Mucosa of descending colon (tissue), 3 donors: ENCODE measurements at regions of chr2 and their contacts with region 1.

Region 1: GRCh38 chr2:54704688-54705605 is 18.5 kb upstream of the EML6 start:
- DNase-seq: no peak
- ATAC-seq: peak; percentile 31
- H3K4me3 ChIP-seq: no peak overlapping the region
- H3K4me1 ChIP-seq: peaks cover 4% of the 10 kb centered on the region
- CTCF ChIP-seq: peak; percentile 27

Region 2: DNA sequence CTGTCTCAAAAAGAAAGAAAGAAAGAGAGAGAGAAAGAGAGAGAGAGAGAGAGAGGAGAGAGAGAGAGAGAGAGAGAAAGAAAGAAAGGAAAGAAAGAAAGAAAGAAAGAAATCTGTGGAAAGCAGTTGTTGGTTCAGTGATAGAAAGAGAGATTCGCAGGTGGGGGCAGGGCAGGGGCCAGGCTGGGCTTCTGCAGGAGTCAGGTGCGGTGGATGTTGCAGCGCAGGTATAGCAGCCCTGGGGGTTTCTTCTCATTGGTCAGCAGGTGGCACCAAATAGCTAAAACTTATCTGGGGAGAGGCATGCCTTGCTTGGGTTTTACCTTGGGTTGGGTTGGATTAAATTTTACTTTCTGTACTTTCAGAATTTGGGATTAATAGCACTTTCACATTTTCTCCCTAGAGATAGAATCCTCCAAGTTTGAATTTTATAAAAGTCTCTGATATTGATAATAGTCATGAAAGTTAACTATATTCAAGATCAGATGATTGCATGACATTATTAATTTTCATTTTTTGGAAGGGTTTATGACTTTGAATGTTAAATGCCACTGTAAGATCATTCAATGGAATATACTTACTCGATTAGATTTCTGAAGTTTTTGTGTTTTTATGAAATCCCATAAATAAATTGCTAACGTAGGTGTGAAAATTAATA is 182.2 kb before region 1 on chr2:
- intact Hi-C with region 1: loop called in 1 of 2 experiments (anchors 10 kb)
- DNase-seq: peak in 2 of 3 donors; percentile 66 to 73
- ATAC-seq: peak; percentile 97
- H3K4me3 ChIP-seq: no peak overlapping the region
- H3K4me1 ChIP-seq: peaks cover 12% of the 10 kb centered on the region
- CTCF ChIP-seq: peak; percentile 11

Region 3: DNA sequence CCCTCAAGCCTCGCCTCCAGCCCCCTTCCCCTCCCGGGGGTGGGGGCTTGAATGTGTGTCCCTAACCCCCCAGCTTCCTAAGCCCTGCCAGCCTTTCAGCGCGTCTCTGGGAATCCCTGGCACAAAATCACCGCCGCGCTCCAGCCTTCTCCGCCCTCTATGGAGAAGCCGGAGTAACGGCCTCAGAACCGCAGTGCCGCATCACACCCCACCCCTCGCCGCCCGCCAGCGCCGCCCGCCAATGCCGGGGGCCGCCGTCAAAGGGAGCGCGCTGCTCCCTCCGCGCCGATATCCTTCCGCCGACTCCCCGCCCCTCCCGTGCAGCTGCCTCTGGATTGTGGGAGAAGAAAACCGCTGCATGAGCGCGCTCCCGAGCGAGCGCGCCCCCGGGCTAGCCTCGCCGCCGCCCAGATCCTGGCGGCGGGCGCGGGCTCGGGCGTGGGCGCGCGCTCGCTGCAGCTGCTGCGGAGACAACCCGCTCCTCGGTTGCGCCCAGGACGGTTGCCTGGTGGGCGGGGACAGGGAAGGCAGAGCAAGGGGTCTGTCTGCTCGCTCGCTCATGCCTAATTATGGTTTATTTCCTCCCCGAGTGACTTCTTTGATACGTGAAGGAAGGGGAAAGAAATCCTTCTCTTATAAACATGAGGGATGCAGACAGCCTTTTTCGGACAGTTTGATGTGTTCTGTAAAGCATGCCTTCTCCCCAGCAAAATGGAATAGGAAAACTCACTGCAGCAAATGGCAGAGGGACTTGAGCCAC is 714.9 kb after region 1 on chr2 and contains the start of gene CCDC88A:
- intact Hi-C with region 1: no loop called
- DNase-seq: peak; percentile 94 to 95 (median 95)
- ATAC-seq: peak; percentile 96
- H3K4me3 ChIP-seq: peak within 1 kb of the TSS; percentile 25
- H3K4me1 ChIP-seq: peaks cover 5% of the 10 kb centered on the region
- CTCF ChIP-seq: no peak
- total RNA-seq, gene CCDC88A: 7.0 to 29.7 (median 14.4) TPM